Activated T-helper 2 cell treated with anti-CD3 and anti-CD28 coated beads, Interferon-gamma antibody, Interleukin-2, Interleukin-4, amounts not matched to agents 10 μg/mL and 5 μg/mL and 100 μg/mL, durations not matched to agents 14 hours and 24 hours and 36 hours (primary cell): ENCODE measurements at regions of chr18 and their contacts with region 1.

Region 1: GRCh38 chr18:54284981-54285785 is 15.9 kb downstream of the POLI start:
- DNase-seq: peak; percentile 44
- H3K4me3 Mint-ChIP-seq: no peak overlapping the region
- H3K27ac Mint-ChIP-seq: peak overlapping the region; percentile 79
- H3K4me1 Mint-ChIP-seq: peaks cover 34% of the 10 kb centered on the region
- H3K27me3 Mint-ChIP-seq: no peaks in the 10 kb centered on the region

Region 2: GRCh38 chr18:54149078-54149697 is 136.0 kb before region 1 on chr18:
- intact Hi-C with region 1: loop called (anchors 1 kb)
- DNase-seq: no peak
- H3K4me3 Mint-ChIP-seq: peak overlapping the region; percentile 43
- H3K27ac Mint-ChIP-seq: peak overlapping the region; percentile 94
- H3K4me1 Mint-ChIP-seq: peaks cover 48% of the 10 kb centered on the region
- H3K27me3 Mint-ChIP-seq: no peaks in the 10 kb centered on the region

Region 3: DNA sequence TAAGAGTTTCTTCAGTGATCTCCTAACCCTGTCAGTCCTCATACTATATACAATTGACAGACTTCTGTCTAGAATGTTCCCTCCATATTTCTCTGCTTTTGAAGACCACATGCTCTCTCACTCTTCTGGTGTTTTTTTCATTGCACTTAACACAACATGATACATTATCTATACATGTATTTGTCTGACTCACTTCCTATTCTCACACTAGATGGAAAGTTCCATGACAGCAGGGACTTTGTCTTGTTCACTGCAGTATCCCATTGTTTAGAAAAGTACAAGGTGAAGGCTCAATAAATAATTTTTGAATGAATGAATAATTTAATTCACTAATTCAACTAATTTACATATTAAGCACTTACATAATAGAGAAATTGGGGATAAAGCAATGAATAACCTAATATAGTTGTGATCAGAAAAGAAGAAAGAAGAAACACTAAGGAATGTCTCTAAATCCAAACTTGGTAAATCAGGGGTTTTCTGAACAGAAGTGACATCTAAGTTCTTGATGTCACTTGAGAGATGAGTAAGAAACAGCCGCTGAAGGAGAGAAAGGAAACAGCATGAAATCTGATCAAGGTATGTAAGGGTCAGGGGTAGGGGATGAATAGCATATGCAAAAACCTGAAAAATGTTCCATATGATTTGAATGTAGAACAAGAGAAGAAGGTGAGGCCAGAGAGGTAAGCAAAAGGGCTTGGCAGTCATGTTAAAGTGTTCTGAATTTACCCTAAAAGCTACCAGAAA is 103.2 kb before region 1 on chr18:
- intact Hi-C with region 1: loop called (anchors 1 kb)
- DNase-seq: no peak
- H3K4me3 Mint-ChIP-seq: no peak overlapping the region
- H3K27ac Mint-ChIP-seq: no peak overlapping the region
- H3K4me1 Mint-ChIP-seq: peaks cover 11% of the 10 kb centered on the region
- H3K27me3 Mint-ChIP-seq: no peaks in the 10 kb centered on the region

Region 4: GRCh38 chr18:54203914-54204313 is 81.3 kb before region 1 on chr18:
- intact Hi-C with region 1: no loop called
- DNase-seq: no peak
- H3K4me3 Mint-ChIP-seq: no peak overlapping the region
- H3K27ac Mint-ChIP-seq: no peak overlapping the region
- H3K4me1 Mint-ChIP-seq: peaks cover 33% of the 10 kb centered on the region
- H3K27me3 Mint-ChIP-seq: no peaks in the 10 kb centered on the region

Region 5: DNA sequence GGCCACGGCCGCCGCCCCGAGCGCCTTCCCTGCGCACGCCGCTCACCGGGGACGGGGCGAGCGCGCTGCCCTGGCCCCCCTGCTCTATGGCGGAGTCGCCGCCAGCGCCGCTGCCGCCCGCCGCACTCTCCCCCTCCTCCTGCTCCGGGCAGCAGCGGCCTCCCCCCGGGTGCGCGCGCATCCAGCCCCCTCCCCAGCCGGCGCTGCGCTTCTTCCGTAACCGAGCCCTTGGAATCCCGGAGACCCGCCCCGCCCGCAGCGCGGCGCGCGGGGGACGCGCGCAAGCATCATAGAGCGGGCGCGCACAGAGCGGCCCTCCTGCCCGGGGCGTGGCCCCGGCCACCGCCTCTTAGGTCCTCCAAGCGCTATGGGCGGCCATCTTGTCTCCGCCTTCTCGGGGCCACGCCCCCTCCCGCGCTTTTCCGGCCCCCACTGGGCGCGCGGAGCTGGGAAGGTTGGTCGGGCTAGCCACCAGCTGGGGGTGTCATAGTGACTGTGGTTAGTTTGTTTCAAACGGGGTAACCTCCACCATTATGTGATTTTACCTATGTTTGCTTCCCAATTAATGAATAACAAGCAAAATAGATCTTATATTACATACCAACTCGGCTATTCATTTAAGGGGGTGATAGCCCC is 60.7 kb before region 1 on chr18 and contains the start of gene MBD2:
- intact Hi-C with region 1: loop called (anchors 1 kb)
- DNase-seq: peak; percentile 91
- H3K4me3 Mint-ChIP-seq: peak within 1 kb of the TSS; percentile 98
- H3K27ac Mint-ChIP-seq: peak within 1 kb of the TSS; percentile 95
- H3K4me1 Mint-ChIP-seq: peaks cover 44% of the 10 kb centered on the region
- H3K27me3 Mint-ChIP-seq: no peaks in the 10 kb centered on the region
- total RNA-seq, gene MBD2: 165 and 196 TPM in 2 replicates

Region 6: GRCh38 chr18:54351186-54351585 is 66.0 kb after region 1 on chr18:
- intact Hi-C with region 1: loop called (anchors 1 kb)
- DNase-seq: no peak
- H3K4me3 Mint-ChIP-seq: no peak overlapping the region
- H3K27ac Mint-ChIP-seq: no peak overlapping the region
- H3K4me1 Mint-ChIP-seq: peaks cover 15% of the 10 kb centered on the region
- H3K27me3 Mint-ChIP-seq: peaks cover 35% of the 10 kb centered on the region

Region 7: DNA sequence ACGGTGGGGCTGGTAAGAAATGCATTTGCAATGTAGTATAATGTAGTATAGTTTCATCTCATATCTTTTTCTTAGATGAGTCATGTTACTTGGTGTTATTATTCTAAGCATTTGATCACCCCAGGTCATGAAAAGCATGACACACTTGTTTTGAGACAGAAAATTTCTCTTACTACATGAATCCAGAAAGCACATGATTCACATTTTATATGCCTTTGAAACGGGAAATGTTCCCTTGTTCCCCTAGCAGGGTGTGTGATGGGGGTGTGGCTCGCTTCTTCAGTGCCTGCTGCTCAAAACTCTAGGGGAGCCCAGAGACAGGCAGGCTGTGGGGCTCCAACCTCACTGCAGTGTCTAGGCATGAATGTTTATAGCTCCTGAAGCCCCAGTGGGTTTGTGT is 427.1 kb after region 1 on chr18:
- intact Hi-C with region 1: loop called (anchors 2 kb)
- DNase-seq: no peak
- H3K4me3 Mint-ChIP-seq: no peak overlapping the region
- H3K27ac Mint-ChIP-seq: no peak overlapping the region
- H3K4me1 Mint-ChIP-seq: peaks cover 48% of the 10 kb centered on the region
- H3K27me3 Mint-ChIP-seq: peaks cover 43% of the 10 kb centered on the region